ENCODE measurements at regions of chr16 and their contacts with region 1.

Region 1: DNA sequence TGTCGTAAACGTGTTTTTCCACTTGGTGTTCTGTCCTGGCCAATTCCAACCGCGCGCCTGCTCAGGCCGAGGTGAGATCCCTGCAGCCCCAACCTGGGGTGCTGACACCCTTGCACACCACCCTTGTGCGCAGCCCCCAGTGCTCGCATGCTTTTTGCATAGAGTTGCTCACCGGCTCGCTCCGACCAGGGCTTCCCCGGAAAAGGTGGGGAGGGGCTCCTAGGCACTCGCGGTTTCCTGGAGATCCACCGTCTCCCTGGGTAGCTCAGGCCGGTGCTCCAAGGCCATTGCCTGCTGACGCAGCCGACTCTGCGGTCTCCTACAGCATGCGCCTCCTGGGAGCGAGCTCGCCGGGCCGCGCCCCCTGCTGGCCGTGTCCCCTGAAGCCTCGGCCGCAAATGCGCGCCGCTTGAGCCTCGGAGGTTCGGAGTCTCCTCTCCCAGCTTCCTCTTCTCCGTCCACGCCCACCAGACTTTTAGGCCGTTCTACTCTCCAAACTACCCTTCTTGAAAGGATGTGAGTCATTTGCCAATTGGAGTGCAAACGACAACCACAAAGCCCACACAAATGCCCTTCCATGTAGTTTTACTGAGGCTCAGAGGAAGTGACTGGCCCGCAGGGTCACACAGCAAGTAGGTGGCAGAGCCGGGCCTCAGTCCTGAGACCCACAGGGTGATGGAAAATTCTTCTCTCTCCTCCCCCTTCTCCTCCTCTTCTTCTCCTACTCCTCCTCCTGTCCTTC is 7.2 kb upstream of the PDP2 start:
- DNase-seq: peak; percentile 92
- H3K4me3 Mint-ChIP-seq: peak overlapping the region; percentile 61
- H3K27ac Mint-ChIP-seq: peak overlapping the region; percentile 83
- H3K4me1 Mint-ChIP-seq: peaks cover 37% of the 10 kb centered on the region
- H3K27me3 Mint-ChIP-seq: no peaks in the 10 kb centered on the region

Region 2: GRCh38 chr16:66705790-66706505 is 167.2 kb before region 1 on chr16:
- CTCF ChIA-PET with region 1: no interaction called
- POLR2A ChIA-PET with region 1: no interaction called
- DNase-seq: no peak
- H3K4me3 Mint-ChIP-seq: no peak overlapping the region
- H3K27ac Mint-ChIP-seq: no peak overlapping the region
- H3K4me1 Mint-ChIP-seq: peaks cover 2% of the 10 kb centered on the region
- H3K27me3 Mint-ChIP-seq: peaks cover 18% of the 10 kb centered on the region

Region 3: GRCh38 chr16:66751303-66751991 is 121.7 kb before region 1 on chr16 and contains the start of gene DYNC1LI2:
- CTCF ChIA-PET with region 1: interaction called, 11 read pairs
- POLR2A ChIA-PET with region 1: no interaction called
- DNase-seq: peak; percentile 84
- H3K4me3 Mint-ChIP-seq: peak within 1 kb of the TSS; percentile 80
- H3K27ac Mint-ChIP-seq: peak within 1 kb of the TSS; percentile 93
- H3K4me1 Mint-ChIP-seq: peaks cover 51% of the 10 kb centered on the region
- H3K27me3 Mint-ChIP-seq: peaks cover 27% of the 10 kb centered on the region
- total RNA-seq, gene DYNC1LI2: 53.9 to 65.9 TPM

Region 4: DNA sequence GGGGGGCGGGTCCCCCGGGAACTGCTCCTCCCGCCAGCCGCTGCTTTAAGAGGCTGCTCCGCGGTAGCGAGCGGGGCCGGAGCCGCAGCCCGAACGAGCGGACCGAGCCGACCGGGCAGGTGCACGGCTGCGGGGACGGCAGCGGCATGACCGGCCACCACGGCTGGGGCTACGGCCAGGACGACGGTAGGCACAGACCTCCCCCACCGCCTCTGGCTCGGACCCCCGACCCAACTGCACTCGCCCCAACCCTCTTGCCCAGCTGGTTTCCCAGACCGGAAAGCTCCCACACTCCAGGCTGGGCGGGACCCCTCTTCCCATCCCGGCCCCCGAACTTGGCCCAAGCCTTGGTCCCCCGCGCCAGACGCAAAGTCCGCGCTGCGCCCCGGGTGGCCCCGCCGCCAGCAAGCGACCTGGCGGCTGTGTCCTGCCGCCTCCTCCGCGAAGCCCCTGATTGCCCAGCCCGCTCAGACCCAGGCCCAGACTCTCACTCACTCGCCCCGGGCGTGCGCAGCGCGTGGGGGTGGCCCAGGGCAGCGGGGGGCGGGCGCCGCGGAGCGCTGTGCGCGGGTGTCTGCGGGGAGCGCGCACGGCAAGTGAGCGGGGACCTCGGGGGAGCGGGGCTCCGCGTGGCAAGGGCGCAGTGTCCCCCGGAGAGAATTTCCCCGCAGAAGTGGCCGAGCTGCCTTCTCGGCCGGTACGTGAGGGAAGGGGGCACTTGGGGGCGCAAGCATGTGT is 28.6 kb before region 1 on chr16 and contains the start of gene CA7:
- CTCF ChIA-PET with region 1: interaction called, 28 read pairs
- POLR2A ChIA-PET with region 1: no interaction called
- DNase-seq: no peak
- H3K4me3 Mint-ChIP-seq: peak within 1 kb of the TSS; percentile 41
- H3K27ac Mint-ChIP-seq: no peak within 1 kb of the TSS
- H3K4me1 Mint-ChIP-seq: peaks cover 29% of the 10 kb centered on the region
- H3K27me3 Mint-ChIP-seq: peaks cover 52% of the 10 kb centered on the region
- total RNA-seq, gene CA7: not detected

Region 5: GRCh38 chr16:66850115-66850815 is 22.8 kb before region 1 on chr16:
- CTCF ChIA-PET with region 1: interaction called, 28 read pairs
- POLR2A ChIA-PET with region 1: no interaction called
- DNase-seq: no peak
- H3K4me3 Mint-ChIP-seq: no peak overlapping the region
- H3K27ac Mint-ChIP-seq: no peak overlapping the region
- H3K4me1 Mint-ChIP-seq: peaks cover 21% of the 10 kb centered on the region
- H3K27me3 Mint-ChIP-seq: peaks cover 18% of the 10 kb centered on the region

Region 6: DNA sequence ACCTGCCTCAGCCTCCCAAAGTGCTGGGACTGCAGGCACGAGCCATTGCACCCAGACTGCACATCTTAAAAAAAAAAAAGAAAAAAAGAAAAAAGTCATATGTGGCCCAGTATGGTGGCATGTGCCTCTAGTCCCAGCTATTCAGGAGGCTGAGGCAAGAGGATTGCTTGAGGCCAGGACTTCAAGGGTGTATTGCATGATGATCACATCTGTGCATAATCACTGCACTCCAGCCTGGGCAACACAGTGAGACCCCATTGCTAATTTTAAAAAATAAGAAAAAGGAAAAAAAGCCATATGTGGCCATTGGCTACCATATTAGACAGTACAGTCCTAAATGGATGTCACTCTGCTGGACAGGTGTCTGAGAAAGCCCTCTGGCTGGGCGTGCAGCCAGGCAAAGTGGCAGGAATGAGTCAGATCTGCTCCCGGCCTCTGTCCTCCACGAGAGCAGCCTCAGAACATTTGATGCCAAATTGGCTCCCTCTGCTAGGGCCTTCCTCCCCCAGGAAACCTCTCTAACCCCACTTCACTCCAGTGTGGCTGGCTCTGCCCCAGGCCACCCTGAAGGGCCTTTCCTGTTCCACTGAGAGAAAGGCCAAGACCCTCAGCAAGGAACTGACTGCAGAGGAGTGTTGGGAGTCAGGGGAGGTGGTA is 14.2 kb before region 1 on chr16:
- CTCF ChIA-PET with region 1: interaction called, 20 read pairs
- POLR2A ChIA-PET with region 1: no interaction called
- DNase-seq: no peak
- H3K4me3 Mint-ChIP-seq: no peak overlapping the region
- H3K27ac Mint-ChIP-seq: no peak overlapping the region
- H3K4me1 Mint-ChIP-seq: no peaks in the 10 kb centered on the region
- H3K27me3 Mint-ChIP-seq: peaks cover 2% of the 10 kb centered on the region

Measured in activated CD4-positive, alpha-beta T cell treated with anti-CD3 and anti-CD28 coated beads, Interleukin-2, amount 10 ng/mL, durations not matched to agents 7 days and 5 days (primary cell).